ENCODE measurements at regions of chr6 and their contacts with region 1.

Region 1: GRCh38 chr6:34887753-34888513 is at the start of gene TAF11:
- DNase-seq: peak; percentile 97
- H3K4me3 Mint-ChIP-seq: peak within 1 kb of the TSS; percentile 99
- H3K27ac Mint-ChIP-seq: peak within 1 kb of the TSS; percentile 96
- H3K4me1 Mint-ChIP-seq: peaks cover 35% of the 10 kb centered on the region
- H3K27me3 Mint-ChIP-seq: no peaks in the 10 kb centered on the region
- CTCF ChIP-seq: no peak
- total RNA-seq, gene TAF11: 42.9 and 44.3 TPM in 2 replicates

Region 2: DNA sequence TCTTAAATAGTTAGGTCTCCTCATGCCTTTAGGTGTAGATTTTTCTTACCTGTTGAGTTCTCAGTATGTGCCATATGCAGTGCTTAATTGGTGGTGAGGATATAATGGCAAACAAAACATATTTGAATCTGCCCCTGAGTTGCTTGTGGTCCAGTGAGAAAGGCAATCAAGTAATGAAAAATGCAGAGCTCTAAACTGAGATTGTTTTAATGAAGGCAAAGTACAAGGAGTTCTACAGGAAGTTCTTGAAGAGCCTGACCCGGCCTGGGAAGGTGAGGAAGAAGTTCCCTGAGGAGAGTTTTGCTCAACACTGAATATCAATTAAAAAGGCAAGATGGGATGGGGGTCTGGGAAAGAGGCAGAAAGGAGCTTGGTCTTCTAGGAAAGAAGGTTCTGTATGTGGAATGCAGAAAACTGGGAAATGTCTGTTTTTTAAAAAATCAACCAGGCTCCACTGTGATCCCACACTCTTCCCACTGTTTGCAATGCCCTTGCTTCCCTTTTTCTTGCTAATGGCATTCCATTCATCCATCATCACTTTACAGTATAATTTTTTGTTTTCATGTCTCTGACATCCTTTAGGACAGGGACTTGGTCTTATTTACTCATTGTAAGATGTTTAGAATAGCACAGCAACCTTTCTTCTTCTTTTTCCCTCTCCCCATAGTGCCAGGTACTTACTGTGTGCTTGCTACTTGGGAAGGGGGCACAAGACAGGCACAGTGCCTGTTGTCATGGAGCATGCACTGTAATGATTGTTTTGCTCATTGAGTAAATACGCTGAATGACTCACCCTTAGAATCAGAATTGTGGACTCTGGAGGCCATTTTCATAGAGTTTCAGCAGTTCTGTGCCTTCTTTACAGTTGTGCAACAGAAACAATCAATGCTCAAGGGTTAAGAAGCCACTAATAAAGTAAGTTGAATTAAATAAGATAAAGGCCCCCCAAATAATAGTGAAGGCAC is 65.4 kb after region 1 on chr6:
- CTCF ChIA-PET with region 1: no interaction called
- intact Hi-C with region 1: loop called (anchors 5 kb)
- DNase-seq: peak; percentile 64
- H3K4me3 Mint-ChIP-seq: no peak overlapping the region
- H3K27ac Mint-ChIP-seq: peak overlapping the region; percentile 69
- H3K4me1 Mint-ChIP-seq: peaks cover 18% of the 10 kb centered on the region
- H3K27me3 Mint-ChIP-seq: no peaks in the 10 kb centered on the region
- CTCF ChIP-seq: no peak

Region 3: DNA sequence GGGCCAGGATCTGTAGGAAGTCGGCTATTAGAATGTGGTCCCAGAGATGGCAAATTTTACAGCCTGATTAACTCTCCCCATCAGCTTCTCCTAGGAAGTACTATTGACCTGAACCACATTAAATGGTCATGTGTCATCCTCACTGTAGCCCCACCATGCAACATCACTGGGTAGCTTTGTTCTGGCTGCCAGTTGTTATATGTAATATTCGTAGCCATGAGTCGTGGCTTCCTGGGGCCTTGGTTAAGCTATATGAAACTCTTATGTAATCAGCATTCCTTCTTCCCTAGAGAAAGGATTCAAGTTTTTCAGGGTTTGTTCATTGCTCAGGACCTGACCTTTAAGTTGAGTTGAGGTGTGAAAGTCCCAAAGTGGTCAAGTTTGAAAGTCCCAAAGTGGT is 126.9 kb after region 1 on chr6:
- CTCF ChIA-PET with region 1: no interaction called
- intact Hi-C with region 1: no loop called
- DNase-seq: no peak
- H3K4me3 Mint-ChIP-seq: no peak overlapping the region
- H3K27ac Mint-ChIP-seq: no peak overlapping the region
- H3K4me1 Mint-ChIP-seq: peaks cover 7% of the 10 kb centered on the region
- H3K27me3 Mint-ChIP-seq: no peaks in the 10 kb centered on the region
- CTCF ChIP-seq: no peak